ENCODE measurements at regions of chr7 and their contacts with region 1.

Region 1: DNA sequence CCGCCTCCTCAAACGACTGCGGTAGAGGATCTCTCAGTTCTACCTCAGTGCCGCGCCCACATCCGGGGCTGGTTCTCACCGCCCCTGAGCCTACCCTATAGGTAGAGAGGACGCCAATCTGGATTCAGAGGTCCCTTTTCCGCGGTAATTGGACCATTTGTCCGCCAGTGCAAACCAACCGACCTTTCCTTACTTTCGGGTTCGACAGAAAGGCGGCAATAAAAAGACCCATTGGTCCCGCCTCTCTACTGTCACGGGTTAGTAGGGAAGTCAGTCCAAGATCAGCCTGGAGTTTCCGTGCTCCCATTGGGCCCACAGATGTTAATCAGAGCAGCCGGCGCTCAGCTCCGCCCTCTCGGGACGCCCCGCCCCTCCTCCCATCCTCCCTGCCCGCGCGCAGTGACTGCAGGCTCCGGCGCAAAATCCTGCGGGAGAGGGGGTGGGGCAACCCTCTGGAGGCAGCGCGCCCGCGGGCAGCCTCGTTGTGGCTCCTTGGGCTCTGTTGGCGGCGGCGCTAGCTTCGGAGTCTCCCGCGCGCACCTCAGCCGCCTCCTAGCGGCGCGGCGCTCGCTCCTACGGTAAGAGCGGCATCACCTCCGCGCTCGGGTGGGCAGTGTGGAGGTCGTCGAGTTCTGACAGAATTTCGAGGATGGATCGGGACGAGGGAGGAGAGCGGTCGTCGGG is at the starts of genes PHTF2 and TMEM60:
- DNase-seq: peak; percentile 98
- H3K4me3 Mint-ChIP-seq: peak within 1 kb of the TSS; percentile 97
- H3K27ac Mint-ChIP-seq: peak within 1 kb of the TSS; percentile 98
- H3K4me1 Mint-ChIP-seq: peaks cover 54% of the 10 kb centered on the region
- H3K27me3 Mint-ChIP-seq: no peaks in the 10 kb centered on the region
- total RNA-seq, gene PHTF2: 31.5 and 32.1 TPM in 2 replicates
- total RNA-seq, gene TMEM60: 9.7 and 10.3 TPM in 2 replicates

Region 2: GRCh38 chr7:77536413-77537135 is 262.0 kb before region 1 on chr7:
- intact Hi-C with region 1: loop called (anchors 1 kb)
- DNase-seq: peak; percentile 98
- H3K4me3 Mint-ChIP-seq: peak overlapping the region; percentile 98
- H3K27ac Mint-ChIP-seq: peak overlapping the region; percentile 94
- H3K4me1 Mint-ChIP-seq: peaks cover 12% of the 10 kb centered on the region
- H3K27me3 Mint-ChIP-seq: no peaks in the 10 kb centered on the region

Region 3: GRCh38 chr7:77759294-77759889 is 39.1 kb before region 1 on chr7:
- intact Hi-C with region 1: loop called (anchors 2 kb)
- DNase-seq: peak; percentile 92
- H3K4me3 Mint-ChIP-seq: no peak overlapping the region
- H3K27ac Mint-ChIP-seq: no peak overlapping the region
- H3K4me1 Mint-ChIP-seq: peaks cover 12% of the 10 kb centered on the region
- H3K27me3 Mint-ChIP-seq: no peaks in the 10 kb centered on the region

Region 4: DNA sequence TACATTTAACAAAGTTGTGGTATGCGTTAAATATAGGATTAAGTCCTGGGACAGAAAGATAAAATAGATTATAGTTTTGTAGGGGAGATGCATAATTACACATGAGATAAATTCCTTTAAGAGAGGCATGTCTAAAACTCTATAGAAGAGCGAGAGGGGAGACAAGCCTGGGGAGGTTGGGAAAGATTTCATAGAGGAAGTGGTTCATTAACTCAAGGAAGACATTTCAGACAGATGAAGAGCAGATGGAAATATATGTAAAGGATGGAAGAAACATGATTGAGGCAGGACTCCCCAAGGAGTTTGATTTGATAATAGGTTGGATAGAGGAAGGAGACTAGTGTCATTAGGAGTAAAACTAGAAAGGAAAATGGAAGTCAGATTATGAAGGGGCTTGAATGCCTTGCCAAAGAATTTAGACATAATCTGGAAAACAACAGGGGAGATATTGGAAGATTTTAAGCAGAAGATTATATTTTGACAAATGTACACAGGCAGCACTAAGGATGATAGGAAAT is 96.1 kb after region 1 on chr7:
- intact Hi-C with region 1: loop called (anchors 5 kb)
- DNase-seq: no peak
- H3K4me3 Mint-ChIP-seq: no peak overlapping the region
- H3K27ac Mint-ChIP-seq: no peak overlapping the region
- H3K4me1 Mint-ChIP-seq: peaks cover 4% of the 10 kb centered on the region
- H3K27me3 Mint-ChIP-seq: no peaks in the 10 kb centered on the region

Region 5: DNA sequence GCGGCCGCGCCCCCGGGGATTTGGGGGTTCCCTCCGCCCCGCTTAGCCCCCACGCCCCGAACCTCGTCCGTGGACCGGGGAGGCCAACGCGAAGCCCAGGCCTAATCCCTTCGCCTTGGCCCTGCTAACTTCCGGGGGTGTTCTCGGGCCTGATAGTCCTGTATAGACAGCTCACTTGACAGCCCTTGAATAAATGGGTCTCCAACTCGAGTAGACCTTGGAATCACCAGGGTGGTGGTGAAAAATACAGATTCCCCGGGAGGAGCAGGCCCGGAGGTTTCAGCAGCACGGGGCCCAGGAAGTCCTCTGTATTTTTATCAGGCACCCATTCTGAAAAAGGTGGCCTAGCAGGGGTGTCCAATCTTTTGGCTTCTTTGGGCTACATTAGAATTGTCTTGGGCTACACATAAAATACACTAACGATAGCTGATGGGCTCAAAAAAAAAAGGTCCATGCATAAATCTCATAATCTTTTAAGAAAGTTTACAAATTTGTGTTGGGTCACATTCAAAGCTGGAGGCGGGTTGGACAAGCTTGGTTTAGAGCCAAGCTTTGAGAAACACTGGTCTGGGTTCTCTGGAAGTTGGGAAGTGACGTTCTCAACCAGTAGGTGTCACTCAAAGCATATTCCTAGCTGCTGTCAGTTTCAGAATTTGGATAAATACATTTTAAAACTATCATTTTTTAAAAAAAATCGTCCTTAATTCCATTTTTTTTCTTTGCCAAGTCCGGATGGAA is 221.8 kb after region 1 on chr7:
- intact Hi-C with region 1: loop called (anchors 5 kb)
- DNase-seq: peak; percentile 77
- H3K4me3 Mint-ChIP-seq: peak overlapping the region; percentile 80
- H3K27ac Mint-ChIP-seq: peak overlapping the region; percentile 64
- H3K4me1 Mint-ChIP-seq: peaks cover 13% of the 10 kb centered on the region
- H3K27me3 Mint-ChIP-seq: peaks cover 53% of the 10 kb centered on the region